GM10248 (cell line): ENCODE measurements at regions of chr19 and their contacts with region 1.

Region 1: DNA sequence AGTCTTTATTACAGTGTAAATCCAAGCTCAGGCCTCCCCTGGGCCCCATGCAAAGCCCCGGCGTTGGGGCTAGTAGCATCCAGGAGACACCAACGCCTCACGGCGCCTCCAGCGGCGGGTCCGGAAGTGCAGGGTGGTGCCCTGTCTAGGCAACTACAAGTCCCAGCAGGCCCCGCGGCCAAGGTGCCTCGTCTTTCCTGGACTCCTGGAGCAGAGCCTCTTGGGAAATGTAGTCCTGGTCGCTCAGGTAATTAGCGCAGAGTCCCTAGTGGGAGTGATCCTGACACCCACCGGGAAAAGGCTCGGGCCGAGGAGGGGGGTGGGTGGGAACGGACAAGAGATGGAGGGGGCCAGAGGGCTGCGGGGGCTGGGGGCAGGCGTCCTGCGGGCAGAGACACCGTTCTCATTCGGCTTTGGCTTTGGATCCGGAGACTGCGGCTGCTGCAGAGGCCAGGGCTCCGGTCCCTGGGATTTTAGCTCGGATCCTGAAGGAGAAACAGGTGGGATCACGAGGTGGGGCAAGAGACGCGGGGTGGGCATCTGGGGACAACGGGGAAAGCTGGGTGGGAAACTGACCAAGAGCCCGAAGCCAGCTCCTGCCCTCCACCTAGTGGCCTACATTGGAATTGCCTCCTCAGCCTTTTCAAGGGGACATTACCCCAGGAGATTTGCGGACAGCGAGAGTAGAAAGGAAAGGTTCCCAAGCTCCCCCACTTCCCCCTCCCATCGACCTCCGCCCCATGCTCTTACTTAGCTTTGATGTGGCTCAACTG is 11.4 kb downstream of the RTN2 start:
- DNase-seq: peak; percentile 92
- CTCF ChIP-seq: peak; percentile 91

Region 2: GRCh38 chr19:45413497-45413896 is 72.0 kb before region 1 on chr19:
- CTCF ChIA-PET with region 1: interaction called, 30 read pairs
- POLR2A ChIA-PET with region 1: no interaction called
- DNase-seq: no peak
- CTCF ChIP-seq: no peak

Region 3: DNA sequence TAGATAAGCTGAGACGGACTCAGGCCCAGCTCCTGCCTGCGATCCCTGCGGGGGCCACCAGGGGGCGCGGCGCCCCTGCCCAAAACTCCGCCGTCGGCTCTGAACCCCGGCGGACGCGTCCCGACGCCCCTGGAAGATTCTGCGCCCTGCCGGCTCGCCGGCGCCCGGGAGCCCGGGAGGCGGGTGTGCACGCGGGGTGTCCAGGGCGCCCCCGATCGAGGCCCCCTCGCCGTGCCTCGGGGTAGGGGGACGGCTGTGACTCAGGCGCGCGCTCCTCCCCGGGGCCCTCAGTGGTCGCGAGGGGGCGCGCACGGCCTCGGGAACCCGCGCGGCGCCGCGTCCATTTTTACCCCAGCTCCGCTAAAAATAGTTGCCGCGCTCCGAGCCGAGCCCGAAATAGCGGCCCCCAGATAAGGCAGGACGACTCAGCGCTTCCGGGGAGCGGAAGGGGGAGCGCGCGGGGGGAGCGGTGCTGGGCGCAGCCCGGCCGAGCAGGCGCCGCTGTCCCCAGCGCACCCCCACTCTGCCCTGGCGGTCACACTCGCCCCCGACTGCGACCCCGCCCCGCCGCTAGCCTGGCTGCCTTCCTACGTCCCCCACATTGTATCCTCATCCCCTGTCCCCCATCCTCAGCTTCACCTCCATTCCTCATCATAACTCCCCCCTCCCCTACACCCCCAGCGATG is 45.8 kb before region 1 on chr19:
- CTCF ChIA-PET with region 1: interaction called, 339 read pairs
- POLR2A ChIA-PET with region 1: interaction called, 14 read pairs
- DNase-seq: peak; percentile 86
- CTCF ChIP-seq: peak; percentile 89

Region 4: DNA sequence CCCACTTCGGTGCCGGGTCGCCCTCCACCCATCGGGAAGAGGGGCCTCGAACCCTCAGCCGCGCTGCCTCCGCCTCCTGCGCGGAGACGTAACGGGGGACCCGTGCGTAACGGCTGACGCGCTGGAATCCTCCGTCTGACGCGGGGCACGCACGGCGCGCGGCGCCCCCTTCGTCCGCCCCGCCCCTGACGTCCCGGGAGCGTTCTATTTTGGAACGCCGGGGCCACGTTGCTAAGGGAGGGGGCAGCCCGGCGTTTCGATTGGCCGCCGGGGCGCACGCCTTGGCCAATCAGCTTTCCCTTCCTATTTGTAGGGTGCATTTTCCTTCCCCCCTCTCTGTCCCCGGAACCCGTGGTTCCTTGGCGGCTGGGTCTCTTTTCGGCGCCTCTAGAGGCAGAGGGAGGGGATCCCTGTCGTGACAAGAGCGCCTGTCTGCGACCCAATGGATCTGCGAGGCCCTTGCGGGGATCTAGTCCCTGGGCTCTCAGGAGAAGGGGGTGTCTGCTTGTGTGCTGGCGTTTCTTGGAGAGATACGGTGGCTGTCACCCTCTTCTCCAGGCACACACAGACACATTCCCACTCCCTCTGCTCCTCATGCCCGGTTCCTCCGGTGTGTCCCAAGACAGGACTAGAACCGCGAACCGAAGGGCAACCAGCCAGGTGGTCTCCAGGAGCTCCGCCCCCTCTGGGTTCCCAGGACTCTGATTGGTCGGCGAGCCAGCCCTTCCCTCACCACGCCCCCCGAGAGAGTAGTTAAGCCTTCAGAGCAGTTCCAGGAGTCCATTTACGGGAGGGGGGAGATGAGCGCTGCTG is 16.2 kb before region 1 on chr19:
- CTCF ChIA-PET with region 1: interaction called, 91 read pairs
- POLR2A ChIA-PET with region 1: interaction called, 5 read pairs
- DNase-seq: peak; percentile 95
- CTCF ChIP-seq: no peak

Region 5: GRCh38 chr19:45506246-45506990 is 20.9 kb after region 1 on chr19:
- CTCF ChIA-PET with region 1: interaction called, 26 read pairs
- POLR2A ChIA-PET with region 1: no interaction called
- DNase-seq: peak; percentile 93
- CTCF ChIP-seq: peak; percentile 81

Region 6: DNA sequence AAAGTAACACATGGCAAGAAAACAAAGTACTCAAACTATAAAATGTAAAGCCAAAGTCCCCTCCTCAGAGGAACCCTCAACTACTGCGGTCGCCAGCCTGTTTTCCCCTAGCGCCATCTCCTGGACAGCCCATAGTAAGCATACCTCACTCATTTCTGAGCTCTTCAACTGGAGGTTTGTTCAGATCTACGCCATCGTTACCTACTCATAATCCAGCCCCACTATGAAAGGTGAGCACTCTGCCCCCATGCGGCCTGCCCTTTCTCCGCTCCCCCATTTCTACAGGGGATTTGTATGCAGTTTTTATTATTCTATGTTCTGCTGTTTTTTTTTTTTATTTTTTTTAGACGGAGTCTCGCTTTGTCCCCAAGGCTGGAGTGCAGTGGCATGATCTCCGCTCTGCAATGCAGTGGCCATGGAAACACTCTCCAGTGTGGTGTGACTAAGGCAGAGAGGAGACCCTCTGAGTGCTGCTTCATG is 72.9 kb after region 1 on chr19:
- CTCF ChIA-PET with region 1: interaction called, 11 read pairs
- POLR2A ChIA-PET with region 1: no interaction called
- DNase-seq: peak; percentile 87
- CTCF ChIP-seq: peak; percentile 65

Region 7: GRCh38 chr19:45681391-45682015 is 196.0 kb after region 1 on chr19:
- CTCF ChIA-PET with region 1: interaction called, 10 read pairs
- POLR2A ChIA-PET with region 1: no interaction called
- DNase-seq: peak; percentile 85
- CTCF ChIP-seq: peak; percentile 89